PC-3 (cell line): ENCODE measurements at regions of chr3 and their contacts with region 1.

Region 1: DNA sequence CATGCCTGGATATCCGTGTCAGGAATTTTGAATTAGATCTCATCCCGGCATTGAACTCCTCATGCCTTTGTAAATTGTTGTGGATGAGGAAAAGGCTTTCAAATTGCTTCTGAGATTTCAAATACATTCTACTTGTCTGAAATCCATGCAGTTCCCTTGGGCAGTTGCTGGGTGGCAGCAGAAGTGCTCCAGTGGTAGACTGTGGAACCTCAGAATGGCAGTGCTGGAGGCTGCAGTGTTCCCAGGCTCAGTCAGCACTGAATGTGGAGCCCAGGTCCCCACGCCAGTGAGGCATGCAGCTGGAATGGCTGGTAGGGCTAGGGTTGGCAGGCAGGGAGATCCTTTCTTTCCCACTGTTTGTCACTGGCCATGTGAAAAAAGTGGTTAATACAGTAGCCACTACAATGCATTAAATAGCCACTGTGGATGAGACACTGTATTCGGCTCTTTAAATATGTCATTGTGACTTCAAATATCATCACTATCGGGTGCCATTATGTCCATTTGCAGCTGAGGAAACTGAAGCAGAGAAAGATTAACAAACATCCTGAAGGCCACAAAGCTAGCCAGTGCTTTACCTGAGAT is 98.6 kb downstream of the TPRG1 start:
- DNase-seq: peak; percentile 93
- ATAC-seq: peak; percentile 86
- H3K4me3 ChIP-seq: no peak overlapping the region
- H3K27ac ChIP-seq: peak overlapping the region; percentile 38
- H3K4me1 ChIP-seq: peaks cover 61% of the 10 kb centered on the region
- H3K27me3 ChIP-seq: no peaks in the 10 kb centered on the region
- CTCF ChIP-seq: peak; percentile 94

Region 2: GRCh38 chr3:189258261-189258660 is 12.1 kb before region 1 on chr3:
- CTCF ChIA-PET with region 1: no interaction called
- POLR2A ChIA-PET with region 1: no interaction called
- intact Hi-C with region 1: no loop called
- DNase-seq: no peak
- ATAC-seq: no peak
- H3K4me3 ChIP-seq: no peak overlapping the region
- H3K27ac ChIP-seq: no peak overlapping the region
- H3K4me1 ChIP-seq: no peaks in the 10 kb centered on the region
- H3K27me3 ChIP-seq: no peaks in the 10 kb centered on the region
- CTCF ChIP-seq: no peak

Region 3: GRCh38 chr3:189340672-189341460 is 70.5 kb after region 1 on chr3:
- CTCF ChIA-PET with region 1: no interaction called
- POLR2A ChIA-PET with region 1: no interaction called
- intact Hi-C with region 1: no loop called
- DNase-seq: peak; percentile 16
- ATAC-seq: no peak
- H3K4me3 ChIP-seq: no peak overlapping the region
- H3K27ac ChIP-seq: no peak overlapping the region
- H3K4me1 ChIP-seq: peaks cover 6% of the 10 kb centered on the region
- H3K27me3 ChIP-seq: no peaks in the 10 kb centered on the region
- CTCF ChIP-seq: peak; percentile 52; the same call in 1 of the 2 replicates

Region 4: DNA sequence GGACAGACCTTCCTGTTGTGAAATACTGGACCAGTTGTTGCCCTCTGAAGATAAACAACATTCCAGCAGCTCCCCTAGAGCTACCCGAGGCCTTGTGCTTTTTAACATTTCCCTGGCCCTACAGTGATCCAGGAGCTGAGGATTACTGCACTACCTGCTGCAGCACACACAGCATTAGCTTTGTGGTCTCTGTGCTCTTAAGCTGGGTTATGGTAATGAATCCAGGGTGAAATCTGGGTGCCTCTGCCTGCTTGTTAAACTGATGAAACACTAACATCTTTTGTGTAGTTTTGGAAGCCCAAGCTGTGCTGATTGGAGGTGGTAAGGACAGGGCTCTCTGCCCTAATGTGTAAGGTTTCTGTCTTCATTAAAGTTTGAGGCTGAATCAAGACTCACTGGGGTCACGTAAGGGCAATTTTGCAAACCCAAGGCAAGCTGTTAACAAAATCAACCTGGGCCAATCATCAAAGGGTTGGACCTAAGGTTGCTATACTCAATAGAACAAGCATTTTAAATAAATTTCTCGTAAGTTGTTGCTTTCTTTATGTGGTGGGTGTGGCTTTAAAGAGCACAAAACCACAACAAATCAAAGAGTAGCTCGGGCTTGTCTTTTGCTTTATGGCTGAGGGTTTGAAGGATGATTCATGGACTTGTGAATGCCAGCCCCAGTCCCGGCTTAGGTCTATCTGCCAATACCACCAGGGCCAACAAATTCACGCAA is 85.3 kb after region 1 on chr3:
- CTCF ChIA-PET with region 1: no interaction called
- POLR2A ChIA-PET with region 1: interaction called, 11 read pairs
- intact Hi-C with region 1: no loop called
- DNase-seq: peak; percentile 84
- ATAC-seq: peak; percentile 72
- H3K4me3 ChIP-seq: peak overlapping the region; percentile 19; the same call in 1 of the 2 replicates
- H3K27ac ChIP-seq: peak overlapping the region; percentile 92
- H3K4me1 ChIP-seq: peaks cover 38% of the 10 kb centered on the region
- H3K27me3 ChIP-seq: no peaks in the 10 kb centered on the region
- CTCF ChIP-seq: no peak

Region 5: DNA sequence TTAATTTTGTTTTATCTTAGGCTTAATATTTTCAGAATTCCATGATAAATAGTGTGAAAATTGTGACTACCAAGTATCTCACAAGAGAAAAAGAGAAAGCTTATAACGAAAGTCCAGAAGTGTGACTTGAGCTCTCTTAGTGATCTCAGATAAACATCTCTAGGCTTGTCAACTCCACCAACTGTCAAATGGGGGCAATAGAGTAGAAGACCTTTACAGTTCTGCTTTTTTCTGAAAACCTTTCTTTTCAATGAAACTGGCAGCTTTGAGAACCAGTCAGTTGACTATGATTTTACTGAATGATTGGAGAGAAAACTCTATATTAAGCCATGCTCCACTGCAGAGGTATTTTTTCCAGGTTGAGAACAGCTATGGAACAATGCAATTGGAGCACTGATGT is 241.7 kb after region 1 on chr3:
- CTCF ChIA-PET with region 1: no interaction called
- POLR2A ChIA-PET with region 1: interaction called, 5 read pairs
- intact Hi-C with region 1: loop called (anchors 2 kb)
- DNase-seq: no peak
- ATAC-seq: no peak
- H3K4me3 ChIP-seq: no peak overlapping the region
- H3K27ac ChIP-seq: peak overlapping the region; percentile 82; the same call in 1 of the 2 replicates
- H3K4me1 ChIP-seq: peaks cover 21% of the 10 kb centered on the region
- H3K27me3 ChIP-seq: no peaks in the 10 kb centered on the region
- CTCF ChIP-seq: no peak

Region 6: GRCh38 chr3:189685854-189686253 is 415.5 kb after region 1 on chr3:
- CTCF ChIA-PET with region 1: interaction called, 4 read pairs
- POLR2A ChIA-PET with region 1: no interaction called
- intact Hi-C with region 1: loop called (anchors 10 kb)
- DNase-seq: peak; percentile 97
- ATAC-seq: peak; percentile 97
- H3K4me3 ChIP-seq: peak overlapping the region; percentile 32; the same call in 1 of the 2 replicates
- H3K27ac ChIP-seq: peak overlapping the region; percentile 96
- H3K4me1 ChIP-seq: peaks cover 44% of the 10 kb centered on the region
- H3K27me3 ChIP-seq: no peaks in the 10 kb centered on the region
- CTCF ChIP-seq: no peak

Region 7: DNA sequence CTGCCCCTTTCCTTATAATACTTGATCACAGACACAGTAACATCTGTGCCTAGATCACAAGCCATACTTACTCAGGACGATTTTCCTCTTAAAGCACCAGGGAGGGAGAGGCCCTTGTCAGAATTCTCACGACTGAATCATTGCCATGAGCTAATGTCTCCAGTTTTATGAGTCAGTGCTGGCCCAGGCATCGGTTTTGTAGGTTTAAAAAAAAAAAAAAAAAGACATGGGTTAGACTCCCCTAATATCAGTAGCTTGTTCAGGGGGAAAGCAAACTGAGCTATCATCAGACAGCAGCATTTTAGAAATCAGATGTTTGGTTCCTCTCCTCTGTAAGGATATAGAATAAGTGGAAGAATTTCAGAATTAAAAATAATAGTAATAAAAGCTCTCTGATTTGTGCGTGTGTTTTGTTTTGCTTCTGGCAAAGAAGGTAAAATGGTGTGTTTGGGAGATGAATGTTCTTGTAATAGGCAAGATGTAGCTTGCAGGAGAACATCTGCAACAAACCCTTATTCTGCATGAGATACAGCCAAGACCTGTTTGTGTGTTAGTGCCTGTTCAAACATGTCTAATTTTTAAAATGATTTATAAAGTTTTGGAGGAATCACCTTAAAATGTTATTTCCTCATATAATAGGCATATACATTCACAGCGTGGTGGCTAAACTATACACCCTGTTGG is 554.4 kb after region 1 on chr3:
- CTCF ChIA-PET with region 1: no interaction called
- POLR2A ChIA-PET with region 1: no interaction called
- intact Hi-C with region 1: loop called (anchors 5 kb)
- DNase-seq: peak; percentile 91
- ATAC-seq: peak; percentile 81
- H3K4me3 ChIP-seq: no peak overlapping the region
- H3K27ac ChIP-seq: peak overlapping the region; percentile 48
- H3K4me1 ChIP-seq: peaks cover 36% of the 10 kb centered on the region
- H3K27me3 ChIP-seq: no peaks in the 10 kb centered on the region
- CTCF ChIP-seq: no peak